GM12878 (cell line): ENCODE measurements at regions of chr12 and their contacts with region 1.

Region 1: DNA sequence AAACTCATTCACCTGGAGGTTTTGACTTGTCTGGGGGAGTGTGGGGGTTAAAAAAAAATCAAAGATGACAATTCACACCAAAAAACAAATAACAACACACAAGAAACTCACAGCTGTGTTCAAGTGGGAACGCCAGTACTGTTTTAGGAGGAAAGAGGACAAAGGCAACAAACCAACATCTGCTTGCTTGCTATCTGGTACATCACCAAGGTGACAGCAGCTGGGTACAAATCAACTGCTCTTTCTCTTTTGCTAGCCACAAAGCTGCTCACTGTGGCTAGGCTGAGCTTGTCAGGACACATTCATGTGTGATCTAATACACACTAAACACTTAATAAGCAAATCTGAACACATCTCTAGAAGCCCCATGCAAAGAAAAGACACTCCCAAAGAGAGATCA is 128.0 kb upstream of the RAP1B start:
- DNase-seq: peak; percentile 89
- ATAC-seq: peak; percentile 90
- H3K4me3 ChIP-seq: no peak overlapping the region
- H3K27ac ChIP-seq: peak overlapping the region; percentile 91
- H3K4me1 ChIP-seq: peaks cover 32% of the 10 kb centered on the region
- H3K27me3 ChIP-seq: no peaks in the 10 kb centered on the region
- CTCF ChIP-seq: no peak
- EP300 ChIP-seq: peak; percentile 74 to 93
- POLR2A ChIP-seq: no peak
- RAD21 ChIP-seq: no peak

Region 2: GRCh38 chr12:67441736-67442346 is 1040.8 kb before region 1 on chr12:
- CTCF ChIA-PET with region 1: no interaction called
- POLR2A ChIA-PET with region 1: no interaction called
- RAD21 ChIA-PET with region 1: no interaction called
- SMC1A ChIA-PET with region 1: no interaction called
- in situ Hi-C with region 1: no loop called
- intact Hi-C with region 1: no loop called
- DNase-seq: no peak
- ATAC-seq: peak; percentile 98
- H3K4me3 ChIP-seq: no peak overlapping the region
- H3K27ac ChIP-seq: no peak overlapping the region
- H3K4me1 ChIP-seq: peaks cover 8% of the 10 kb centered on the region; the same call in 1 of the 2 replicates
- H3K27me3 ChIP-seq: no peaks in the 10 kb centered on the region; a peak in 1 of 4 replicates
- CTCF ChIP-seq: peak; percentile 68 to 82 (median 76)
- EP300 ChIP-seq: no peak
- POLR2A ChIP-seq: no peak
- RAD21 ChIP-seq: peak; percentile 77

Region 3: GRCh38 chr12:68358532-68359485 is 123.9 kb before region 1 on chr12:
- CTCF ChIA-PET with region 1: interaction called, 6 read pairs
- POLR2A ChIA-PET with region 1: interaction called, 15 read pairs
- RAD21 ChIA-PET with region 1: interaction called, 28 read pairs
- SMC1A ChIA-PET with region 1: interaction called, 23 read pairs
- in situ Hi-C with region 1: no loop called
- intact Hi-C with region 1: loop called (anchors 2 kb)
- DNase-seq: peak; percentile 74
- ATAC-seq: peak; percentile 90
- H3K4me3 ChIP-seq: no peak overlapping the region
- H3K27ac ChIP-seq: peak overlapping the region; percentile 72
- H3K4me1 ChIP-seq: peaks cover 14% of the 10 kb centered on the region
- H3K27me3 ChIP-seq: no peaks in the 10 kb centered on the region
- CTCF ChIP-seq: peak; percentile 56 to 69 (median 66)
- EP300 ChIP-seq: peak; percentile 83; a peak in 3 of 4 replicates
- POLR2A ChIP-seq: no peak
- RAD21 ChIP-seq: peak; percentile 83

Region 4: GRCh38 chr12:68374307-68374982 is 108.2 kb before region 1 on chr12:
- CTCF ChIA-PET with region 1: no interaction called
- POLR2A ChIA-PET with region 1: interaction called, 40 read pairs
- RAD21 ChIA-PET with region 1: interaction called, 36 read pairs
- SMC1A ChIA-PET with region 1: interaction called, 38 read pairs
- in situ Hi-C with region 1: no loop called
- intact Hi-C with region 1: loop called (anchors 1 kb)
- DNase-seq: peak; percentile 98
- ATAC-seq: peak; percentile 88
- H3K4me3 ChIP-seq: peak overlapping the region; percentile 4; the same call in 1 of the 2 replicates
- H3K27ac ChIP-seq: peak overlapping the region; percentile 82
- H3K4me1 ChIP-seq: peaks cover 34% of the 10 kb centered on the region
- H3K27me3 ChIP-seq: no peaks in the 10 kb centered on the region
- CTCF ChIP-seq: no peak
- EP300 ChIP-seq: peak; percentile 97 to 98
- POLR2A ChIP-seq: no peak
- RAD21 ChIP-seq: no peak

Region 5: DNA sequence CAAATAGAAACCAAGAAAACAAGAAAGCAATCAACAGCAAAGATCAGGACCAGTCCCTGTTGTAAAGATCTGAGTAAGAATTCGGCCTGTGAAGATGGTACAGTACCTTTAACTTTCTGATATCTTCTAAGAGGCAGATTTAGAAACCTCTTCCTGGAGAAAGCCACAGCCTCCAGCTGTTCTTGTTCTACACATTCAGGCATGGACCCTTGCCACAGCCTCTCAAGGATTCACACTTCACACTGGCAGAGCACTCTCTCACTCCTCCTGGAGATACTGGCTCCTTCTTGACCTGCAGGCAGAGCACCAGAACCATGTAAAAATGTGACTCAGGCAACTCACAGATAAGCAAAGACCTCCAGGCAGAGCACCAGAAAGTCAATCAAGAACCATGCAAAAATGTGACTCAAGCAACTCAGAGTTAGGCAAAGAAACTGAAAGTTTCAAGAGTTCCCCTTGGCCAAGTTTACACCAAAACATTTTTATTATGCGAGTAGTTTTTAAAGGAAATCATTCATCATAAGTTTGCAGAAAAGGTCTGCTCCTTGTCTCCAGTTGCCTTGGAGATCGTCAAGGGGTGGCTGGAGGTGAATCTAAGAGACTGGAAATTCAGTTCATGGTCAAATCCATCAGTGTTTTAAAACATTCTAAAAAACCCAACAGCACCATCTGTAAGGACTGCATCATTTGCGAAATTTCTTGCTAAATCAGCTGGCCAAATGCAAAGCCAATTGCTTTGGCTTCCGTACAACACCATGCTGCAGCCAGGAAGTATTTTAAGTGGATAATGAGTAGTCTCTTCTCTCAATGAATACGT is 31.2 kb before region 1 on chr12:
- CTCF ChIA-PET with region 1: interaction called, 15 read pairs
- POLR2A ChIA-PET with region 1: interaction called, 17 read pairs
- RAD21 ChIA-PET with region 1: interaction called, 93 read pairs
- SMC1A ChIA-PET with region 1: interaction called, 43 read pairs
- in situ Hi-C with region 1: no loop called
- intact Hi-C with region 1: loop called (anchors 2 kb)
- DNase-seq: peak; percentile 88
- ATAC-seq: peak; percentile 78
- H3K4me3 ChIP-seq: peak overlapping the region; percentile 51
- H3K27ac ChIP-seq: peak overlapping the region; percentile 73
- H3K4me1 ChIP-seq: peaks cover 36% of the 10 kb centered on the region
- H3K27me3 ChIP-seq: no peaks in the 10 kb centered on the region
- CTCF ChIP-seq: no peak
- EP300 ChIP-seq: peak; percentile 32 to 50; a peak in 2 of 4 replicates
- POLR2A ChIP-seq: no peak
- RAD21 ChIP-seq: no peak

Region 6: GRCh38 chr12:68468036-68468435 is 14.6 kb before region 1 on chr12:
- CTCF ChIA-PET with region 1: interaction called, 6 read pairs
- POLR2A ChIA-PET with region 1: interaction called, 4 read pairs
- RAD21 ChIA-PET with region 1: interaction called, 10 read pairs
- SMC1A ChIA-PET with region 1: interaction called, 28 read pairs
- in situ Hi-C with region 1: no loop called
- intact Hi-C with region 1: no loop called
- DNase-seq: no peak
- ATAC-seq: no peak
- H3K4me3 ChIP-seq: no peak overlapping the region
- H3K27ac ChIP-seq: no peak overlapping the region
- H3K4me1 ChIP-seq: no peaks in the 10 kb centered on the region
- H3K27me3 ChIP-seq: no peaks in the 10 kb centered on the region
- CTCF ChIP-seq: no peak
- EP300 ChIP-seq: no peak
- POLR2A ChIP-seq: no peak
- RAD21 ChIP-seq: no peak

Region 7: DNA sequence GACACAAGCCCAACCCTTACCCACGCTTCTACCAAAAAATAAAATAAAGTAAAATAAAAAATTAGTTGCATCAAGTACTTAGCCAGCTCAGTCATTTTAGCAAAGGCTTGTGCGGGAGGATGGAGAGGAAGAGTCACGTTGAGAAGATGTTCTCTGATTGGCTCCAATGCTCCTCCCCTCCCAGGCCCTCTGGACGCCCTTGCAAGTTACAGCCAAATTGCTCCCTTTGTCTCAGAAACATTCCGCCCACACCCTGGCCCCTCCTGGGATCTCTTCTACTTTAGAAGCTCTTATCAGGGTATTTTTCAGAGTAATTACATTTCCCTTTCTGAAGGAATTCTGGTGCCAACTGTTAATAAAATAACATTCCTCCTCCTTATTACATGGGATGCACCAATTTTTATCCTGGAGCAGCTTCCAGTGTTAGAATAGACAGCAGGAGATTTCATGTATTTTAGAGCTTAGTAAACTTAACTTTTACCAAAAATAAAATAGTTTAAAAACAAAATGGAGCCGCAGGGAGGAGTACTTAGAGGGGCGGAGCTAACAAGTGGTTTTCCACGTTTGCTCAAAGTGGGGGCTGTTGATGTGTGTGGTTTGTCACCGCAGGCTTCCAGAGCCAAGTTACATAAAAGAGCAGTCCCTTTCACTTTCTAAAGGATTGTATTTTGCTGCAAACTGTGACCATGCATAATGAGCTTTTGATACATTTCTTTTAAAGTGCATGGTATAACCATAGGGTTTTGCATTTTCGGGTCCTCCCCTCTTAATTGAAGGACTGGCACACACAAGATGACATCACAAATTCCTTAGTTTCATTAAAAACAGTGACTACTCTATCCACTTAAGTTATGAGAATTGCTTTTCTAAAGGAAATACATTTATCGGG is 56.3 kb after region 1 on chr12:
- CTCF ChIA-PET with region 1: interaction called, 3 read pairs
- POLR2A ChIA-PET with region 1: interaction called, 3 read pairs
- RAD21 ChIA-PET with region 1: interaction called, 9 read pairs
- SMC1A ChIA-PET with region 1: interaction called, 11 read pairs
- in situ Hi-C with region 1: no loop called
- intact Hi-C with region 1: no loop called
- DNase-seq: peak; percentile 59
- ATAC-seq: peak; percentile 96
- H3K4me3 ChIP-seq: no peak overlapping the region
- H3K27ac ChIP-seq: no peak overlapping the region
- H3K4me1 ChIP-seq: peaks cover 3% of the 10 kb centered on the region; the same call in 1 of the 2 replicates
- H3K27me3 ChIP-seq: no peaks in the 10 kb centered on the region
- CTCF ChIP-seq: no peak
- EP300 ChIP-seq: peak in 1 of 2 experiments; percentile 77; a peak in 1 of 4 replicates
- POLR2A ChIP-seq: no peak
- RAD21 ChIP-seq: no peak

Region 8: GRCh38 chr12:68610370-68611093 is 127.9 kb after region 1 on chr12 and contains the start of gene RAP1B:
- CTCF ChIA-PET with region 1: no interaction called
- POLR2A ChIA-PET with region 1: interaction called, 5 read pairs
- RAD21 ChIA-PET with region 1: interaction called, 42 read pairs
- SMC1A ChIA-PET with region 1: interaction called, 21 read pairs
- in situ Hi-C with region 1: no loop called
- intact Hi-C with region 1: loop called (anchors 2 kb)
- DNase-seq: no peak
- ATAC-seq: peak; percentile 84
- H3K4me3 ChIP-seq: peak within 1 kb of the TSS; percentile 86
- H3K27ac ChIP-seq: peak within 1 kb of the TSS; percentile 98
- H3K4me1 ChIP-seq: peaks cover 4% of the 10 kb centered on the region; the same call in 1 of the 2 replicates
- H3K27me3 ChIP-seq: no peaks in the 10 kb centered on the region
- CTCF ChIP-seq: no peak
- EP300 ChIP-seq: no peak
- POLR2A ChIP-seq: peak; percentile 96
- RAD21 ChIP-seq: no peak
- polyA plus RNA-seq, gene RAP1B: 88.9 to 95.0 TPM

Region 9: GRCh38 chr12:68792952-68793835 is 310.5 kb after region 1 on chr12:
- CTCF ChIA-PET with region 1: no interaction called
- POLR2A ChIA-PET with region 1: no interaction called
- RAD21 ChIA-PET with region 1: no interaction called
- SMC1A ChIA-PET with region 1: no interaction called
- in situ Hi-C with region 1: no loop called
- intact Hi-C with region 1: no loop called
- DNase-seq: peak; percentile 66
- ATAC-seq: peak; percentile 100
- H3K4me3 ChIP-seq: no peak overlapping the region
- H3K27ac ChIP-seq: no peak overlapping the region
- H3K4me1 ChIP-seq: no peaks in the 10 kb centered on the region
- H3K27me3 ChIP-seq: no peaks in the 10 kb centered on the region
- CTCF ChIP-seq: peak in 1 of 3 experiments; percentile 27; a peak in 1 of 6 replicates
- EP300 ChIP-seq: no peak
- POLR2A ChIP-seq: no peak
- RAD21 ChIP-seq: no peak